CD4-positive, alpha-beta T cell (primary cell): ENCODE measurements at regions of chr14 and their contacts with region 1.

Region 1: DNA sequence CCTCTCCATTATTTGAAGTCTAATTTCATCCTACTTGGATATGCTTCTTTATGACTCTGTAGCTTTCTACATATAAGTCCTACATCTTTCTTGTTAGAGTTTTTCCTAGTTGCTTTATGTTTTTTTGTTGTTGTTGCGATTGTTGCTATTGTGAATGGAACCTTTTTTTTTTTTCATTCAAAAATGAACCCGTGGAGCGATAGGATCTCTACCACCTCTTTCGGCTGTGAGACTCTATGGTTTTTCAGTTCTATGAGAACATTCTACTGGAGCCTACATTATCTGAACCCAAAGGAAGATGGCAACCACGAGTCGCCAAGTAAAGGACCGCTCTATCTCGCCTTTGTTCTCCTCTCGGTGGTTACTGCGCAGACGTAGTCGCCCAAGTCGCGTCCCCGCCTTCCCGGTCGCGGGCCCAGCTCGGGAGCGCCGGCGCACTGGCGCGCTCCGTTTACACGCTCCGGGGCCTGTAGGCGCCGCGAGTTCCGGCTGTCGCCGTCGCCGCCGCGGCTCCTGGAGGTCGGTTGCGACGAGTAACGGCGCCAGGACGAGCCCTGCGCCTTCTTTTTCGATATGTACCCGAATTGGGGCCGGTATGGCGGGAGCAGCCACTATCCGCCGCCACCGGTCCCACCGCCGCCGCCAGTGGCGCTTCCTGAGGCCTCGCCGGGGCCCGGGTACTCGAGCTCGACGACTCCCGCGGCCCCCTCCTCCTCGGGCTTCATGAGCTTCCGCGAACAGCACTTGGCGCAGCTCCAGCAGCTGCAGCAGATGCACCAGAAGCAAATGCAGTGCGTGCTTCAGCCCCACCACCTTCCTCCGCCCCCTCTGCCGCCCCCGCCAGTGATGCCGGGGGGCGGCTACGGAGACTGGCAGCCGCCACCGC is at the start of gene YLPM1:
- DNase-seq: peak; percentile 85 to 98 (median 90)
- ATAC-seq: peak; percentile 89
- H3K4me3 ChIP-seq: peak within 1 kb of the TSS; percentile 84
- H3K4me3 Mint-ChIP-seq: peak within 1 kb of the TSS; percentile 88
- H3K27ac ChIP-seq: peak within 1 kb of the TSS; percentile 91 to 96
- H3K27ac Mint-ChIP-seq: peak within 1 kb of the TSS; percentile 85
- H3K4me1 ChIP-seq: peaks cover 37% of the 10 kb centered on the region
- H3K4me1 Mint-ChIP-seq: peaks cover 50% of the 10 kb centered on the region
- H3K27me3 ChIP-seq: no peaks in the 10 kb centered on the region
- H3K27me3 Mint-ChIP-seq: no peaks in the 10 kb centered on the region
- CTCF ChIP-seq: peak; percentile 54
- total RNA-seq, gene YLPM1: 87.2 to 88.6 TPM

Region 2: DNA sequence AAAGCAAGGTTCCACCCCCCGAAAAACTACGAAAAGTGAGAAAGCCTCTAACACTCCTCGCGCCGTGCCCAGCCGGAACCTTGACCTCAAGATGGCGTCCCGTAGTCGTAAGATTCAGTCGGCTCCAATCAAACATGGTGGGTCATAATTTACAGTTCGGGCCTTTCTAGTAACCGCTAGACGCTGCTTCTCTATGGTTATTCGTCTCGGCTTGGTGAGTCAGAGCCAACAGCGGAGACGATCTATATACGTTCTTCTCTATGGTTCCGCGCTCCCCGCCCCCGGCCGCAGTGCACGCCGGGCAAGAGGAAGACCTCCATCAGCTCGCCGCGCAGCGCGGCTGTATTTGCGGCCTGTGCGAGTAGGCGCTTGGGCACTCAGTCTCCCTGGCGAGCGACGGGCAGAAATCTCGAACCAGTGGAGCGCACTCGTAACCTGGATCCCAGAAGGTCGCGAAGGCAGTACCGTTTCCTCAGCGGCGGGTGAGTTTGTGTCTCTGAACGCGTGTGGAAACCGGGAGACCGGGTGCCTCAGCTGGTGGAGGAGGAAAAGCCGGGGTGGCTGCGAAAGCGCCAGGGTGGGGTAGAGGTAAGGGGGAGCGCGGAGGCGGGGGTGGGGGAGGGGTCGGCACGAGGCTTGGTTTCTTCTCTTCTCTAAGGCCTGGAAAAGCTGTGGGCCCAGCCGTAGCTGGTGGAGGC is 1704.8 kb before region 1 on chr14 and contains the start of gene RBM25:
- CTCF ChIA-PET with region 1: no interaction called
- POLR2A ChIA-PET with region 1: interaction called, 10 read pairs
- intact Hi-C with region 1: no loop called
- DNase-seq: peak; percentile 89 to 98 (median 92)
- ATAC-seq: peak; percentile 93
- H3K4me3 ChIP-seq: peak within 1 kb of the TSS; percentile 91
- H3K4me3 Mint-ChIP-seq: no peak within 1 kb of the TSS
- H3K27ac ChIP-seq: peak within 1 kb of the TSS; percentile 78 to 93
- H3K27ac Mint-ChIP-seq: no peak within 1 kb of the TSS
- H3K4me1 ChIP-seq: peaks cover 38% of the 10 kb centered on the region
- H3K4me1 Mint-ChIP-seq: peaks cover 36% of the 10 kb centered on the region
- H3K27me3 ChIP-seq: peaks cover 0 to 2% of the 10 kb centered on the region in 2 experiments
- H3K27me3 Mint-ChIP-seq: no peaks in the 10 kb centered on the region
- CTCF ChIP-seq: no peak
- total RNA-seq, gene RBM25: 157 to 161 TPM

Region 3: DNA sequence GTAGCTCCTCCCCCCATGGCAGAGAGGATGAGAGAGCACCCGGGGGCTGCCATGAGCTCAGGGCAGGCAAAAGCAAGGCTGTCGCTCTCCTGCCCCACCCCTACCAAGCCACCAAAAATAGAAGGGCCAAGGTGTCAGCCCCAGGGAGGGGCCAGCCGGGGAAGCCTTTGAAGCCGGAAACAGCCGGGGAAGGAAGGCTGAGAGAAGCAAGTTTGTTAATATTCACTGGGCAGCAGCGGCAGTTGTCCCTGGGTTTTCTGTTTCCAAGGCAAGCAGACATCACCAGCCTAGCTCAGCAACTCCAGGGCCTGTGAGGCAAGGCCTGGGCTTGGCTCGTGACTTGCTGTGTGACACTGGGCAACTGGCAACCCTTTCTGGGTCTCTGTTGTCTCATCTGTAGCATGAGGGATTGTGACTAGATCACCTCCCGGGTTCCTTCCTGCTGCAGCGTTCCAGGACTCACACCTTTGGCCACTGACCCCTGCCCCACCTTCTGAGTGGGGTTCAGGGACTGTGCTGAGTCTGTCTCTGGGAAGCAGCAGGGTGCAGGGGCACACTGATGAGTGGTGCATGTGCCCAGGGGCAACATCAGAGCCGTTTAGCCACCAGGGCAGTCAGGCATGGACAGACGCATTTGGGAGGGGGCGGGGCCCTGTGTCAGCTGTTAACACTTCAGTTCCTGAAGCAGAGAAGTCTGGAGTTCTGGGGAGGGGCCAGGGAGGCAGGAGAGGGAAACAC is 361.5 kb before region 1 on chr14:
- CTCF ChIA-PET with region 1: no interaction called
- POLR2A ChIA-PET with region 1: no interaction called
- intact Hi-C with region 1: no loop called
- DNase-seq: peak; percentile 28 to 85 (median 51)
- ATAC-seq: peak; percentile 97
- H3K4me3 ChIP-seq: peak overlapping the region; percentile 20
- H3K4me3 Mint-ChIP-seq: peak overlapping the region; percentile 62
- H3K27ac ChIP-seq: peak overlapping the region in 1 of 2 donors; percentile 68
- H3K27ac Mint-ChIP-seq: peak overlapping the region; percentile 74
- H3K4me1 ChIP-seq: peaks cover 27% of the 10 kb centered on the region
- H3K4me1 Mint-ChIP-seq: peaks cover 22% of the 10 kb centered on the region
- H3K27me3 ChIP-seq: no peaks in the 10 kb centered on the region
- H3K27me3 Mint-ChIP-seq: no peaks in the 10 kb centered on the region
- CTCF ChIP-seq: no peak

Region 4: GRCh38 chr14:74478996-74479635 is 284.0 kb before region 1 on chr14:
- CTCF ChIA-PET with region 1: no interaction called
- POLR2A ChIA-PET with region 1: no interaction called
- intact Hi-C with region 1: no loop called
- DNase-seq: no peak
- ATAC-seq: no peak
- H3K4me3 ChIP-seq: no peak overlapping the region
- H3K4me3 Mint-ChIP-seq: no peak overlapping the region
- H3K27ac ChIP-seq: no peak overlapping the region
- H3K27ac Mint-ChIP-seq: no peak overlapping the region
- H3K4me1 ChIP-seq: no peaks in the 10 kb centered on the region
- H3K4me1 Mint-ChIP-seq: no peaks in the 10 kb centered on the region
- H3K27me3 ChIP-seq: no peaks in the 10 kb centered on the region
- H3K27me3 Mint-ChIP-seq: no peaks in the 10 kb centered on the region
- CTCF ChIP-seq: no peak

Region 5: DNA sequence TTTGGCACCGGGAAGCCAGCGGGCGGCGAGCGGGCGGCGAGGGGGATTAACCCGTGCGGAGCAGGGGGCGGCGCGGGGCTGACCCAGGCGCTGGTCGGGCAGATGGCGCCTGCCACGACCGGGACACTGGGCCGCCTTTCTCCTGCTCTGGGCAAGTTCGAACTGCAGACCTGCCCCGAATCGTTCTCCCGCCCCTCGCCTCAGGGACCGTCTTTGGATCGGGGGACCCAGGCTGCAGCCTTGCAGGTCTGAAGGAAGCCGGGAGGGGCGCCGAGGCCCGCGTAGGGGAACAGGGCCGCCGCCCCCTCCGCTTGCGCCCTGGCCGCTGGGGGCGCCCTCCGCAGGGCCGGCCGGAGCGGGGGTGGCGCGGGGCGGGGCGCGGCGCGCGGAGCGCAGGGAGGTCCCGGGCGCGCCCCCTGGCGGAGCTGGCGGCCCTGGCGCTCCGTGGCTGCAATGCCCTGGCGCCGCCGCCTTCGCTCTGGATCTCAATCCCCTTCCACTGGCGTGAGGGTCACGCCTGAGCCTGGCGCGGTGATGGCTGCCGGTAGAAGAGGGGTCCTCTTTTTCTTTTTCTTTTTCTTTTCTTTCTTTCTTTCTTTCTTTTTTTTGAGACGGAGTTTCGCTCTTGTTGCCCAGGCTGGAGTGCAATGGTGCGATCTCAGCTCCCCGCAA is 150.7 kb before region 1 on chr14:
- CTCF ChIA-PET with region 1: interaction called, 12 read pairs
- POLR2A ChIA-PET with region 1: interaction called, 19 read pairs
- intact Hi-C with region 1: no loop called
- DNase-seq: peak; percentile 65 to 95 (median 81)
- ATAC-seq: peak; percentile 79
- H3K4me3 ChIP-seq: peak overlapping the region; percentile 65
- H3K4me3 Mint-ChIP-seq: peak overlapping the region; percentile 79
- H3K27ac ChIP-seq: no peak overlapping the region
- H3K27ac Mint-ChIP-seq: no peak overlapping the region
- H3K4me1 ChIP-seq: peaks cover 54% of the 10 kb centered on the region
- H3K4me1 Mint-ChIP-seq: peaks cover 29% of the 10 kb centered on the region
- H3K27me3 ChIP-seq: no peaks in the 10 kb centered on the region
- H3K27me3 Mint-ChIP-seq: peaks cover 9% of the 10 kb centered on the region
- CTCF ChIP-seq: peak; percentile 52

Region 6: GRCh38 chr14:74712499-74713394 is 50.4 kb before region 1 on chr14 and contains the starts of genes AREL1 and FCF1:
- CTCF ChIA-PET with region 1: interaction called, 6 read pairs
- POLR2A ChIA-PET with region 1: interaction called, 6 read pairs
- intact Hi-C with region 1: loop called (anchors 2 kb)
- DNase-seq: peak; percentile 62 to 93 (median 70)
- ATAC-seq: peak; percentile 92
- H3K4me3 ChIP-seq: peak within 1 kb of the TSS; percentile 76
- H3K4me3 Mint-ChIP-seq: peak within 1 kb of the TSS; percentile 90
- H3K27ac ChIP-seq: peak within 1 kb of the TSS; percentile 76 to 81
- H3K27ac Mint-ChIP-seq: peak within 1 kb of the TSS; percentile 92
- H3K4me1 ChIP-seq: peaks cover 12% of the 10 kb centered on the region
- H3K4me1 Mint-ChIP-seq: peaks cover 65% of the 10 kb centered on the region
- H3K27me3 ChIP-seq: no peaks in the 10 kb centered on the region
- H3K27me3 Mint-ChIP-seq: no peaks in the 10 kb centered on the region
- CTCF ChIP-seq: no peak
- total RNA-seq, gene AREL1: 30.6 to 35.9 TPM
- total RNA-seq, gene FCF1: 31.9 to 32.9 TPM

Region 7: GRCh38 chr14:74793506-74794168 is 30.5 kb after region 1 on chr14:
- CTCF ChIA-PET with region 1: interaction called, 8 read pairs
- POLR2A ChIA-PET with region 1: interaction called, 22 read pairs
- intact Hi-C with region 1: no loop called
- DNase-seq: peak in 4 of 14 experiments; percentile 13 to 55 (median 36)
- ATAC-seq: peak; percentile 54
- H3K4me3 ChIP-seq: peak overlapping the region; percentile 22
- H3K4me3 Mint-ChIP-seq: peak overlapping the region; percentile 85
- H3K27ac ChIP-seq: peak overlapping the region; percentile 14 to 16
- H3K27ac Mint-ChIP-seq: peak overlapping the region; percentile 70
- H3K4me1 ChIP-seq: peaks cover 17% of the 10 kb centered on the region
- H3K4me1 Mint-ChIP-seq: peaks cover 63% of the 10 kb centered on the region
- H3K27me3 ChIP-seq: no peaks in the 10 kb centered on the region
- H3K27me3 Mint-ChIP-seq: no peaks in the 10 kb centered on the region
- CTCF ChIP-seq: peak; percentile 50

Region 8: DNA sequence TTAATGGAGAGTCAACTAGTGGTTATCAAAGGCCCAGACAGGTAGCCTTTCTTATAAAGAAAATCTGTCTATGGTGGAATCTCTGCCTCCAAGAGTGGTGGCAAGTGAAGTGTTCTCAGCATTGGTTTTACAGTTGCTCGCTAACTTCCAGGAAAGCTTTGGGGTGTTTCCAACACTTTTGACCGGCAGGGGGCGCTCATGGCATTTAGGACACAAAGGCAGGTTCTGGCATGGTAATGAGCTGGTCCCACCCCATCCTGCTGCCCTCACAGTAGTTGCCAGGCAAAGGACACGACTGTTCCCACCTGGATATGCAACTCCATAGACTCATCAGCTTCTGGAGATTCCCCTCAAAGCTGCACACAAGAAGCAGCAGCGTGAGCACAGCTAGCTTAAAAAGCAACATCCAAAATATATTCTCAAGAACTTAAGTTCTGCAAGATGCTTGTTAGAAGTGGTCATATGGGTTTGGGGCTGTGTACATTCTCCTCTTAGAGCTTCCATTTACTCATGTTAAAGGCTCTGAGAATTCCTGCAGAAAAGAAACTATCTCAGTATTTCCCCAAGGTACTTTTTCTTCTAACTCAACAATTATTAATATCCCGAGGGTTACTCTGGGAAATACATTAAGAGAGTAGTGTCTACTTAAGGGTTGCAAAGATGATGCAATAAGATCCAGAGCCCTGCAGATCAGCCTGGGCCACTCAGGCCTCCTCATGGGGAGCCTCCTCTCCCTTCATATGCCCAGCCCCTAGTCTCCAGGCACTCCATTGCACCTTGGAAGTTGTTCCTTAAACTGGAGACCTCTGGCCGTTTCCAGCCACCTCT is 98.0 kb after region 1 on chr14:
- CTCF ChIA-PET with region 1: interaction called, 3 read pairs
- POLR2A ChIA-PET with region 1: interaction called, 12 read pairs
- intact Hi-C with region 1: no loop called
- DNase-seq: peak; percentile 83 to 98 (median 92)
- ATAC-seq: peak; percentile 88
- H3K4me3 ChIP-seq: no peak overlapping the region
- H3K4me3 Mint-ChIP-seq: no peak overlapping the region
- H3K27ac ChIP-seq: no peak overlapping the region
- H3K27ac Mint-ChIP-seq: no peak overlapping the region
- H3K4me1 ChIP-seq: peaks cover 8% of the 10 kb centered on the region
- H3K4me1 Mint-ChIP-seq: peaks cover 7% of the 10 kb centered on the region
- H3K27me3 ChIP-seq: no peaks in the 10 kb centered on the region
- H3K27me3 Mint-ChIP-seq: no peaks in the 10 kb centered on the region
- CTCF ChIP-seq: peak; percentile 88

Region 9: GRCh38 chr14:75176142-75176820 is 413.1 kb after region 1 on chr14 and contains the start of gene TMED10:
- CTCF ChIA-PET with region 1: no interaction called
- POLR2A ChIA-PET with region 1: interaction called, 4 read pairs
- intact Hi-C with region 1: loop called in 1 of 2 experiments (anchors 5 kb)
- DNase-seq: peak; percentile 84 to 95 (median 89)
- ATAC-seq: peak; percentile 75
- H3K4me3 ChIP-seq: peak within 1 kb of the TSS; percentile 79
- H3K4me3 Mint-ChIP-seq: peak within 1 kb of the TSS; percentile 94
- H3K27ac ChIP-seq: peak within 1 kb of the TSS; percentile 99 to 100
- H3K27ac Mint-ChIP-seq: peak within 1 kb of the TSS; percentile 97
- H3K4me1 ChIP-seq: peaks cover 30% of the 10 kb centered on the region
- H3K4me1 Mint-ChIP-seq: peaks cover 53% of the 10 kb centered on the region
- H3K27me3 ChIP-seq: no peaks in the 10 kb centered on the region
- H3K27me3 Mint-ChIP-seq: no peaks in the 10 kb centered on the region
- CTCF ChIP-seq: no peak
- total RNA-seq, gene TMED10: 153 to 156 TPM